ENCODE measurements at regions of chr9 and their contacts with region 1.

Region 1: DNA sequence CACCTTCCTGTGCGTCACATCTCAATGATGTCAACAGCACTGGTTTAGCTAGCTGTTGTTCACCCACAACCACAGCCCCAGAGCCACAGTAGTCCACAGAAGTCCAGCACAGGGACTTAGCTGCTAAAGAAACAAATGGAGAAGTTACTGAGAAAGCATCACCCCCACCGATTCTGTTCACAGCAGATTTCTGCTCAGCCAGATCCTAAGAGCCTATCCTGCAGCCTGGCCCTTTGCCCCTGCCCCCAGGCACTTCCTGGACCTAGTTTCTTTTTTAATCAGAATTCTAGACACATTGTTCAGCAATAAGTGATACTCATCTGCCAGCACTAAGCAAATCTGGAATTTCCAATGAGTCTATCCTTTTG is 7.4 kb downstream of the B4GALT1 start:
- DNase-seq: peak in 7 of 9 experiments; percentile 48 to 91 (median 68)
- ATAC-seq: peak; percentile 63
- H3K4me3 ChIP-seq: peak overlapping the region; percentile 6 to 10
- H3K4me3 Mint-ChIP-seq: peak overlapping the region; percentile 69
- H3K27ac ChIP-seq: peak overlapping the region; percentile 90 to 91
- H3K27ac Mint-ChIP-seq: peak overlapping the region; percentile 96
- H3K4me1 ChIP-seq: peaks cover 94% of the 10 kb centered on the region
- H3K4me1 Mint-ChIP-seq: peaks cover 96% of the 10 kb centered on the region
- H3K27me3 ChIP-seq: no peaks in the 10 kb centered on the region
- H3K27me3 Mint-ChIP-seq: no peaks in the 10 kb centered on the region
- CTCF ChIP-seq: no peak

Region 2: DNA sequence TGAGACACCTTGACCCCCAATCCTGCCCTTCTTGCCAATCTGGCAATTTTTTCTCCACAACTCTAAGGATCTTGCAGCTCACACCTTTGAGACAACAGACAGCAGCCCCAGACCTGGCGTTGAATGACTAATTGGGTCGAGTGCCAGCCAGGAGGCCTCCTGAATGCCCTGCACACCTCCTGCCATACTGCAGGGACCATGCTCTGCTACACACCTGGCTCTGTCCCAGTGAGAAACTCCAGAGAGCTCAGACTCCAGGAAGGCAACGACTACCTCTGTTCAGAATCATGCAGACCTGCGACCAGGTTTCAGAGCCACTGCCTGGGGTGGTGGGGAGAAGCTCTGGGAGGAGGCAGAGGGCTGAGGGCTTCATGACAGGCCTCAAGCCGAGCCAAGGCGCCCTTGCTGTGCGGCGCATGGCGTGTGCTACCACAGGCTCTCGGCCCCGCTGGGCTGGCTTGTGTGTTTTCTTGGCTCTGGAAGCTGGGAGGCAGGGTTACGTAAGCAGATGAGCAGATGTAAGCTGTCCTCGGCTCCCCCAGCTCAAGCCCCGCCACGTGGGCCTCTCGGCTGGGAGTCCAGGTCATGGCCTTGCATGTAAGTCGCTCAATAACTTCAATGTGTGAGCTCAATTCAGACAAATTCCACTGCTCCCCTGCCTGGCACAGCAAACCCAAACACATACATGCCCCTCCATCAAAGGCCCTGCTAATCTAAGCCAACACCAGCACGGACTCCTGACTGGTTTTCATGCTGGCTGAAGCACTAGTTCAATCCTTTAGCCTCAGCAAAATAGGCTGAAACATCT is 20.1 kb before region 1 on chr9:
- CTCF ChIA-PET with region 1: interaction called, 3 read pairs
- POLR2A ChIA-PET with region 1: interaction called, 12 read pairs
- intact Hi-C with region 1: loop called in 1 of 2 experiments (anchors 2 kb)
- DNase-seq: peak in 1 of 9 experiments; percentile 45
- ATAC-seq: no peak
- H3K4me3 ChIP-seq: no peak overlapping the region
- H3K4me3 Mint-ChIP-seq: peak overlapping the region; percentile 56
- H3K27ac ChIP-seq: peak overlapping the region in 1 of 2 experiments; percentile 81
- H3K27ac Mint-ChIP-seq: peak overlapping the region; percentile 83
- H3K4me1 ChIP-seq: peaks cover 93% of the 10 kb centered on the region
- H3K4me1 Mint-ChIP-seq: peaks cover 93% of the 10 kb centered on the region
- H3K27me3 ChIP-seq: no peaks in the 10 kb centered on the region
- H3K27me3 Mint-ChIP-seq: no peaks in the 10 kb centered on the region
- CTCF ChIP-seq: no peak

Region 3: GRCh38 chr9:33146313-33146712 is 13.4 kb before region 1 on chr9:
- CTCF ChIA-PET with region 1: interaction called, 3 read pairs
- POLR2A ChIA-PET with region 1: interaction called, 12 read pairs
- intact Hi-C with region 1: loop called in 1 of 2 experiments (anchors 2 kb)
- DNase-seq: no peak
- ATAC-seq: no peak
- H3K4me3 ChIP-seq: no peak overlapping the region
- H3K4me3 Mint-ChIP-seq: no peak overlapping the region
- H3K27ac ChIP-seq: no peak overlapping the region
- H3K27ac Mint-ChIP-seq: no peak overlapping the region
- H3K4me1 ChIP-seq: peaks cover 74% of the 10 kb centered on the region
- H3K4me1 Mint-ChIP-seq: peaks cover 77% of the 10 kb centered on the region
- H3K27me3 ChIP-seq: no peaks in the 10 kb centered on the region
- H3K27me3 Mint-ChIP-seq: no peaks in the 10 kb centered on the region
- CTCF ChIP-seq: no peak

Region 4: DNA sequence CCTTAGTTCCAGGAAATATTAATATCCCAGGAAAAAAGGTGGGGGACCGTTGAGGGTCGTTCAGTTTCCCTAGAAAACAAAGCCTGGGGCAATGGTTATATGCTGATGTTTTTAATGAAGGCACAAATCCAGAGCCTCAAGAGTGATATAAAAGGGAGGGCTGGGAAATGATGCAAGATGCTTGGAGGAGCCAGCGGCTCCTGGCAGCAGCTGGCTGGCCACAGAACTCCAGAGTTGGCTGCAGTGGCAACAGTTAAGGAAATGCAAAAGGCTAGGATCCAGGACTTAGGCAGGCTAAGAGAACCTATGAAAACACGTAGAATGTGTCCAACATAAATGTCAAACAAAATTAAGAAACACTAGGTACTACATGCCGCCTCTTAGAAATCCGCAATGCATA is 38.4 kb after region 1 on chr9:
- CTCF ChIA-PET with region 1: no interaction called
- POLR2A ChIA-PET with region 1: no interaction called
- intact Hi-C with region 1: no loop called
- DNase-seq: no peak
- ATAC-seq: no peak
- H3K4me3 ChIP-seq: no peak overlapping the region
- H3K4me3 Mint-ChIP-seq: no peak overlapping the region
- H3K27ac ChIP-seq: no peak overlapping the region
- H3K27ac Mint-ChIP-seq: no peak overlapping the region
- H3K4me1 ChIP-seq: no peaks in the 10 kb centered on the region
- H3K4me1 Mint-ChIP-seq: peaks cover 11% of the 10 kb centered on the region
- H3K27me3 ChIP-seq: no peaks in the 10 kb centered on the region
- H3K27me3 Mint-ChIP-seq: no peaks in the 10 kb centered on the region
- CTCF ChIP-seq: no peak

Region 5: DNA sequence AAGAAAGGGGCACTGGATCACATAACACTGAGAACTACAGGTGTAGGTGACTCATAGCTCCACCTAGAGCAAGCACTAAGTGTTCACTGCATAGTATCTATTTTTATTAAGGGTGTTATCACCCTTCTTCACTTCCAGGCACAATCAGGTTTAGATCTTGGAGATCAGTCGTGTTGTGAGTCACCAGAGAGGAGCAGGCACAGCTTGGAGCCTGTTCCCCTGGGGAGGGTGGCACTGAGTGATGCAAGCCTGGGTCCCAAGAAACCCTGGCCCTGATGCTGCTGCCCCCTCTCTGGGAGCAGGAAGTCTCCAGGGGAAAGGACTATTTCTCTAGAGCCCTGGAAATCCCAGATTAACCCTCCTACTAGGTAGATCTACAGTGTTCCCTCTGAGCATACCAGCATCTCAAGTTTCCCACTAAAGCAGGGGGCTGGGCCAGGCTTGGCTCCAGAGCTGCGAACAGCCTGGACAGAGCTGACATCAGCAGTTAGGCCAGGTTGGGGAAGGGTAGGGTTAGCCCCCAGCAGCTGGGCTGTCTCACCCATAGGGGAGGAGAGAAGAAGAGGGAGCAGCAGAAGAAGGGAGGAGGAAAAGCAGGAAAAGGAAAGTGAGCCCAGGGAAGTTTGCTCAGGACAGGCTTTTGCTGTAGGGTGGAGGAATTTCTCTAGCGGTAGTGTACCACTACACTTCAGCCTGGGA is 52.1 kb after region 1 on chr9:
- CTCF ChIA-PET with region 1: no interaction called
- POLR2A ChIA-PET with region 1: no interaction called
- intact Hi-C with region 1: no loop called
- DNase-seq: no peak
- ATAC-seq: no peak
- H3K4me3 ChIP-seq: no peak overlapping the region
- H3K4me3 Mint-ChIP-seq: no peak overlapping the region
- H3K27ac ChIP-seq: no peak overlapping the region
- H3K27ac Mint-ChIP-seq: no peak overlapping the region
- H3K4me1 ChIP-seq: no peaks in the 10 kb centered on the region
- H3K4me1 Mint-ChIP-seq: no peaks in the 10 kb centered on the region
- H3K27me3 ChIP-seq: no peaks in the 10 kb centered on the region
- H3K27me3 Mint-ChIP-seq: no peaks in the 10 kb centered on the region
- CTCF ChIP-seq: no peak

Measured in CD8-positive, alpha-beta T cell (primary cell).